Posterior vena cava (tissue), 2 donors: ENCODE measurements at regions of chr9 and their contacts with region 1.

Region 1: DNA sequence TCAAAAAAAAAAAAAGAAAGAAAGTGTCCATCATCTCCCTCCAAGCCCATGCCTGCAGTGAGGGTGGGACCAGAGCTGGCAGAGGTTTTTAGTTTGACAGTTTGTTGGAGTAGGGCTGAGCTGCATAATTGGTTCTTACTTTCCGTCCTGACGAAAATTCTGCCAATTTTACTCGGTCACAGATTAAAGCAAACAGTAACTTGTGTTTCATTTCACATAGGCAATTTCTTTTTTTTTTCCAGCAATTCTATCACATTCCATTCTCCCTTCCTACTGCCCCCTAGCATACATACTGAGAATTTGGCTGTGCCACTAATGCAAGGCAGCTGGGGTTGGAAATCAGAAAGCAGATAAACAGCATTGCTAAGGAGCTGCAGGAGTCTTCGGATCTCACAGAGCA is 132.4 kb downstream of the FRMD3 start:
- DNase-seq: no peak

Region 2: GRCh38 chr9:83334320-83334719 is 71.4 kb before region 1 on chr9:
- intact Hi-C with region 1: loop called in 1 of 2 experiments (anchors 2 kb)
- DNase-seq: peak; percentile 95

Region 3: DNA sequence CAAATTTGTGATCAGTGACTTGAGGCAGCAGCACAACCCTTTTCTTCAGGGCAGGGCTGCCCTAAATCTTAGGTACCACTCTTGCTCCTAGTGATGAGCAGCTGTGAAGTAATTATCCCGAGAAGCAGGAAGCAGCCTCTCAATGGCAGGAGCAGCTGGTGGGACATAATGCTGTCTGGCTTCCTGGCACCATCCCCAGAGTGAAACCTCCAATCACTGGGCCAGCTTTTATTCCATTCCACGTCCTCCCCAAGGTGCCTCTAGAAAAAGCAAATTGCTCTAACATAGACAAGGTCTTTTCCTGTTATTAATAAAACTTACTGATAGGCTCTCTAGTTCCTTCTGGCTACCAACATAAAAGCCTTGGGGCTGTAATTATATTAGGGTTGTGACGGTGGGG is 21.5 kb before region 1 on chr9:
- intact Hi-C with region 1: no loop called
- DNase-seq: no peak